Common myeloid progenitor, CD34-positive (primary cell): ENCODE measurements at regions of chr17 and their contacts with region 1.

Region 1: GRCh38 chr17:979538-980405 is at the start of gene NXN:
- DNase-seq: peak; percentile 55 to 74 (median 73)
- H3K4me3 ChIP-seq: peak within 1 kb of the TSS; percentile 27 to 80 (median 63)
- H3K27ac ChIP-seq: no peak within 1 kb of the TSS
- H3K4me1 ChIP-seq: peaks cover 0 to 19% (median 13%) of the 10 kb centered on the region in 4 experiments
- H3K27me3 ChIP-seq: peaks cover 17 to 39% (median 20%) of the 10 kb centered on the region in 5 experiments

Region 2: DNA sequence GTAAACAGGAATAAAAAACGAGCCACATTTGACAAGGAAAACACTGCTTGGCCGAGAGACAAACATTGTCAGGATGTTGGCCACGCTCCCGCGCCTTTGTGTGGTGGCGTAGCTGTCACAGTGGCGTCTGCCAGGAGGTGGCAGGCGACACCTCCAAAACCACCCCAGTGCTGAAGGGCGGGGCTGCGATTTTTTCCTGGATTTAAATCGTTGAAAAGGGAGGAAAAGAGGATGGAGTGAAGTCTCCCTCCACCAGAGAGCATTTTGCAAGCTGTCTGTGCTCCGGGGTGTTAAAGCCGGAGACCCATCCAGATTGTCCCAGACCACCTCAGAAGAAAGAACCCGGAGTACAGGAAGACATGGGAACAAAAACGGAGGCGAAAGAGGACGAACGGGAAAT is 184.9 kb before region 1 on chr17:
- CTCF ChIA-PET with region 1: interaction called, 38 read pairs
- POLR2A ChIA-PET with region 1: interaction called, 5 read pairs
- DNase-seq: peak; percentile 54 to 65 (median 60)
- H3K4me3 ChIP-seq: peak overlapping the region in 1 of 7 experiments; percentile 31
- H3K27ac ChIP-seq: no peak overlapping the region
- H3K4me1 ChIP-seq: peaks cover 0 to 7% (median 0%) of the 10 kb centered on the region in 4 experiments
- H3K27me3 ChIP-seq: peaks cover 0 to 2% (median 0%) of the 10 kb centered on the region in 5 experiments

Region 3: GRCh38 chr17:879549-880442 is 100.0 kb before region 1 on chr17:
- CTCF ChIA-PET with region 1: interaction called, 24 read pairs
- POLR2A ChIA-PET with region 1: interaction called, 3 read pairs
- DNase-seq: peak; percentile 83 to 89 (median 88)
- H3K4me3 ChIP-seq: no peak overlapping the region
- H3K27ac ChIP-seq: no peak overlapping the region
- H3K4me1 ChIP-seq: peaks cover 0 to 23% (median 8%) of the 10 kb centered on the region in 4 experiments
- H3K27me3 ChIP-seq: peaks cover 0 to 6% (median 0%) of the 10 kb centered on the region in 5 experiments

Region 4: GRCh38 chr17:996554-997344 is 17.0 kb after region 1 on chr17 and contains the start of gene TIMM22:
- CTCF ChIA-PET with region 1: interaction called, 15 read pairs
- POLR2A ChIA-PET with region 1: no interaction called
- DNase-seq: peak; percentile 98 to 99 (median 99)
- H3K4me3 ChIP-seq: peak within 1 kb of the TSS; percentile 85 to 100 (median 97)
- H3K27ac ChIP-seq: peak within 1 kb of the TSS; percentile 80 to 92
- H3K4me1 ChIP-seq: peaks cover 8 to 17% (median 12%) of the 10 kb centered on the region in 4 experiments
- H3K27me3 ChIP-seq: no peaks in the 10 kb centered on the region